ENCODE measurements at regions of chr10 and their contacts with region 1.

Region 1: GRCh38 chr10:75617485-75618155 is 186.2 kb downstream of the LRMDA start:
- DNase-seq: no peak
- H3K4me3 ChIP-seq: no peak overlapping the region
- H3K27ac ChIP-seq: no peak overlapping the region
- H3K4me1 ChIP-seq: peaks cover 0 to 27% (median 3%) of the 10 kb centered on the region in 4 donors
- H3K27me3 ChIP-seq: no peaks in the 10 kb centered on the region
- CTCF ChIP-seq: no peak
- EP300 ChIP-seq: no peak
- POLR2A ChIP-seq: no peak

Region 2: GRCh38 chr10:75640803-75641202 is 23.2 kb after region 1 on chr10:
- in situ Hi-C with region 1: no loop called
- intact Hi-C with region 1: loop called (anchors 1 kb)
- DNase-seq: peak; percentile 66
- H3K4me3 ChIP-seq: no peak overlapping the region
- H3K27ac ChIP-seq: peak overlapping the region; percentile 50 to 71 (median 70)
- H3K4me1 ChIP-seq: peaks cover 0 to 23% (median 3%) of the 10 kb centered on the region in 4 donors
- H3K27me3 ChIP-seq: no peaks in the 10 kb centered on the region
- CTCF ChIP-seq: no peak
- EP300 ChIP-seq: no peak
- POLR2A ChIP-seq: no peak

Region 3: DNA sequence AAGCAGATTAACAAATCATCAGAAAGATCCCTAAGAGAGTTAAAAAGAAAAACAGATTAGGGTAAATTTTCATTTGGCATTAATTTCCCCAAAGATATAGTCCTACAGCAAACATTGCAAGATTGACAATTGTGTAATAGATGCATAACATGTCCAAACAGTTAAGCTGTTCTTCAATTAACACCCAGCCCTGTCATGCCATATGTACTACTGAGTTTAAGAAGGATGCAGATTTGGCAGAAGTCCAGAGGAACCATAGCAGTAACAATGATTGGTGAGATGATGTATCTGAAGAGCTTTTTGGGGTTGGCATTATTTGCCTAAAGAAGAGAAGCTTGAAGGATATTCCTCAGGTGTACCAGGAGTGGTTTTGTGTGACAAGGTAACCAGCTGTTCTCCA is 101.4 kb after region 1 on chr10:
- in situ Hi-C with region 1: no loop called
- intact Hi-C with region 1: no loop called
- DNase-seq: no peak
- H3K4me3 ChIP-seq: no peak overlapping the region
- H3K27ac ChIP-seq: no peak overlapping the region
- H3K4me1 ChIP-seq: no peaks in the 10 kb centered on the region
- H3K27me3 ChIP-seq: no peaks in the 10 kb centered on the region
- CTCF ChIP-seq: no peak
- EP300 ChIP-seq: no peak
- POLR2A ChIP-seq: no peak